ENCODE measurements at regions of chr7 and their contacts with region 1.

Region 1: DNA sequence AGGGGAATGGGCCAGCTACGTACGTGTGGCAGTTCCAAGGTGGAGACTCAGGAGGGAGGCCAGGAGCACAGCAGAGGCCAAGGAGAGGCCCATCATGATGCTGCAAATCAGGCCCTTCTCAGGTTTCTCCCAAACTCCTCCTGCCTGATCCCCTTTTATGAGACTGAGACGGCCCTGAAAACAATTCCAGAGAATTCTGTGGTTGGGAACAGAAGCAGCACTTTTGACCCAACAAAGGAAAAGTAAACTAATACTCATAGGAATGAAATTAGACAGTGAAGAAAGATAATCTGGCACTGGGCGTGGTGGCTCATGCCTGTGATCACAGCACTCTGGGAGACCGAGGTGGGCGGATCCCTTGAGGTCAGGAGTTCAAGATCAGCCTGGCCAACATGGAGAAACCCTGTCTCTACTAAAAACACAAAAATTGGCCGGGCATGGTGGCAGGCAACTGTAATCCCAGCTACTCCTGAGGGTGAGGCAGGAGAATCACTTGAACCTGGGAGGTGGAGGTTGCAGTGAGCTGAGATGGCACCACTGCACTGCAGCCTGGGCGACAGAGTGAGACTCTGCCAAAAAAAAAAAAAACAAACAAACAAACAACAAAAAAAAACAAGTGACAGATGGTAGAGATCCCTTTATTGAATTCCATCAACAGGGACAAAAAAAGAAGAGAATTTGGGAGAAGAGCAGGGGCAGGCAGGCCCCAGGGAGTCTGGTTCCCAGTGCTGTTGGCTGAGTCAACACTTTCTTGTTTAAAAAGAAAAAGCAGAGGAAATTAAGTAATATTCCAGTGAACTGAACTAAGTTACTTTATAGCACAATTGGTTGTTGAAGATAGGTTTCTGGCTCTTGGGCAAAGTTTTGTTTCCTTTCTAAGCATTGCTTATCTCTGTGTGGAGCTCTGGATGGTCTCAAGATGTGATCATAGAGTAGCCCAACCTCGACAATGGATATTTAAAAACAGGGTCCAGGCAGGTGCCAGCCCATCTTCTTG is at the start of gene CCL26:
- DNase-seq: no peak
- ATAC-seq: no peak
- H3K4me3 ChIP-seq: no peak within 1 kb of the TSS
- H3K4me3 Mint-ChIP-seq: no peak within 1 kb of the TSS
- H3K27ac ChIP-seq: no peak within 1 kb of the TSS
- H3K27ac Mint-ChIP-seq: no peak within 1 kb of the TSS
- H3K4me1 ChIP-seq: peaks cover 13% of the 10 kb centered on the region
- H3K4me1 Mint-ChIP-seq: peaks cover 5% of the 10 kb centered on the region
- H3K27me3 ChIP-seq: no peaks in the 10 kb centered on the region
- H3K27me3 Mint-ChIP-seq: no peaks in the 10 kb centered on the region
- CTCF ChIP-seq: no peak
- total RNA-seq, gene CCL26: not detected

Region 2: DNA sequence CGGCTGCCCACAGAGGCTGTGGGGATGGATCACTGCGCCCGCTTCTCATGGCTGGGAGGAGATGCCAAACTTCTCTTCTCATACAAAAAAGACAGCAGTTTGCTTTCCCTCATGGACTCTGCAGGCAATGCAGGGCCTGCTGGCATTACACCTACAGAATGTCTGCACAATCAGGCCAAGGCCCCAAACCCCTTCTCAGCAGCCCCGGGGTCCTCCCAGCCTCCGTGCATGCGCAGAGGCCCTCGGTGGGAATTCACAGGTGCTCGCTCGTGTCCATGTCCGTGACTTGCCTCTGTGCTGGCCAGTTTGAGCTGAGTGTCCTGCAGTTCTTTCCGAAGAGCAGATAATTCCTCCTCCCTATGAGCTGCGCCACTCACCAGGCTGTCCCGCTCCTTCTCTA is 216.6 kb before region 1 on chr7:
- CTCF ChIA-PET with region 1: no interaction called
- POLR2A ChIA-PET with region 1: no interaction called
- intact Hi-C with region 1: loop called in 1 of 2 experiments (anchors 2 kb)
- DNase-seq: no peak
- ATAC-seq: no peak
- H3K4me3 ChIP-seq: no peak overlapping the region
- H3K4me3 Mint-ChIP-seq: no peak overlapping the region
- H3K27ac ChIP-seq: no peak overlapping the region
- H3K27ac Mint-ChIP-seq: no peak overlapping the region
- H3K4me1 ChIP-seq: no peaks in the 10 kb centered on the region
- H3K4me1 Mint-ChIP-seq: no peaks in the 10 kb centered on the region
- H3K27me3 ChIP-seq: no peaks in the 10 kb centered on the region
- H3K27me3 Mint-ChIP-seq: no peaks in the 10 kb centered on the region
- CTCF ChIP-seq: no peak